Caco-2 (cell line): ENCODE measurements at regions of chr17 and their contacts with region 1.

Region 1: DNA sequence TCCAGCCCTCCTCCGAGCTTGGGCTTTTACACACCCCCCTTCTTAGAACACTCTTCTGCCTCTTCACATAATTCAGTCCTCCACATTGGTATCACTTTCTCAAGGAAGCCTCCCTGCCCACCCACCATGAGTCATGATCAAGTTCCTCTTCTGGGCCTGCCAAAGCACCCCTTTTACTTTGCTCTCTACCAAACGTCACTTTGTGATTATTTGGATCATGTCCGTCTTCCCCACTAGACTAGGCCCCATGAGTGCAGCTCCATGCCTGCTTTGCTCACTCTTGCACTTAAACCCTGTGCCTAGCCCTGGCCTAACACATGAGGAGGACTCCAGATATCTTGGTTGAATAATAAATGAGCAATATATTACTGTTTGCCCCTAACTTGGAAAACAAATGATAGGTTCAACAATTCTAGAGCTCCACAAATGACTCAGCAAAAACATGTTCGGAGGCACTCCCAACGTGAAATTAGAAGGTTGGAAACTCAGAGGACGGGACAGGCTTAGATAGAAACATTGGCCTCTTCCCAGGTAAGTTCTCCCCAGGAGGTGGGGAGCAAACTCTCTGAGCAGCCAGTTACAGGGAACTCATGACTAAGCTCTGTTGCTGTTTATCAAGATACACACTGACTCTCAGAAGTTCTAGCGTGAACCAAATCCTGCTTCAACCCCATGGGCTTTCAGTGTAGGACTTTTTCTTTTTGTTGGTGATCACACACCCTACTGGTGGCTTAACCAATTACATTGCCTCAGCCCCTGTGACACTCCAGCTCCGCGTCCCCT is 28.3 kb downstream of the G6PC1 start:
- DNase-seq: peak; percentile 62 to 73
- H3K4me3 ChIP-seq: no peak overlapping the region
- H3K4me3 Mint-ChIP-seq: no peak overlapping the region
- H3K27ac Mint-ChIP-seq: peak overlapping the region; percentile 8
- H3K4me1 ChIP-seq: peaks cover 6% of the 10 kb centered on the region; the same call in 1 of the 2 replicates
- H3K4me1 Mint-ChIP-seq: no peaks in the 10 kb centered on the region
- H3K27me3 ChIP-seq: no peaks in the 10 kb centered on the region
- H3K27me3 Mint-ChIP-seq: no peaks in the 10 kb centered on the region
- CTCF ChIP-seq: peak; percentile 76

Region 2: GRCh38 chr17:42886283-42887176 is 42.4 kb before region 1 on chr17:
- CTCF ChIA-PET with region 1: interaction called, 3 read pairs
- POLR2A ChIA-PET with region 1: interaction called, 6 read pairs
- intact Hi-C with region 1: loop called (anchors 5 kb)
- DNase-seq: peak in 1 of 2 experiments; percentile 48
- H3K4me3 ChIP-seq: no peak overlapping the region
- H3K4me3 Mint-ChIP-seq: no peak overlapping the region
- H3K27ac Mint-ChIP-seq: no peak overlapping the region
- H3K4me1 ChIP-seq: peaks cover 9% of the 10 kb centered on the region
- H3K4me1 Mint-ChIP-seq: peaks cover 9% of the 10 kb centered on the region
- H3K27me3 ChIP-seq: no peaks in the 10 kb centered on the region
- H3K27me3 Mint-ChIP-seq: no peaks in the 10 kb centered on the region
- CTCF ChIP-seq: no peak

Region 3: GRCh38 chr17:42980398-42981397 is 51.8 kb after region 1 on chr17 and contains the start of gene RUNDC1:
- CTCF ChIA-PET with region 1: no interaction called
- POLR2A ChIA-PET with region 1: no interaction called
- intact Hi-C with region 1: loop called (anchors 1 kb)
- DNase-seq: peak; percentile 91 to 94
- H3K4me3 ChIP-seq: peak within 1 kb of the TSS; percentile 100
- H3K4me3 Mint-ChIP-seq: peak within 1 kb of the TSS; percentile 100
- H3K27ac Mint-ChIP-seq: peak within 1 kb of the TSS; percentile 96
- H3K4me1 ChIP-seq: peaks cover 7% of the 10 kb centered on the region; the same call in 1 of the 2 replicates
- H3K4me1 Mint-ChIP-seq: peaks cover 12% of the 10 kb centered on the region
- H3K27me3 ChIP-seq: no peaks in the 10 kb centered on the region
- H3K27me3 Mint-ChIP-seq: no peaks in the 10 kb centered on the region
- CTCF ChIP-seq: peak in 1 of 2 experiments; percentile 55
- total RNA-seq, gene RUNDC1: 17.6 and 18.2 TPM in 2 replicates